IMR-90 (cell line): ENCODE measurements at regions of chr20 and their contacts with region 1.

Region 1: GRCh38 chr20:45044084-45044573 is 56.8 kb downstream of the KCNS1 start:
- DNase-seq: peak; percentile 86
- ATAC-seq: peak; percentile 94
- H3K4me3 ChIP-seq: no peak overlapping the region
- H3K27ac ChIP-seq: no peak overlapping the region
- H3K4me1 ChIP-seq: peaks cover 10% of the 10 kb centered on the region
- H3K27me3 ChIP-seq: no peaks in the 10 kb centered on the region
- CTCF ChIP-seq: peak; percentile 94
- POLR2A ChIP-seq: no peak
- RAD21 ChIP-seq: peak; percentile 92

Region 2: GRCh38 chr20:44448753-44449546 is 595.2 kb before region 1 on chr20:
- CTCF ChIA-PET with region 1: no interaction called
- POLR2A ChIA-PET with region 1: no interaction called
- dilution Hi-C with region 1: no loop called
- in situ Hi-C with region 1: no loop called
- intact Hi-C with region 1: no loop called
- DNase-seq: no peak
- ATAC-seq: no peak
- H3K4me3 ChIP-seq: no peak overlapping the region
- H3K27ac ChIP-seq: no peak overlapping the region
- H3K4me1 ChIP-seq: peaks cover 2% of the 10 kb centered on the region; the same call in 1 of the 2 replicates
- H3K27me3 ChIP-seq: peaks cover 34% of the 10 kb centered on the region
- CTCF ChIP-seq: peak; percentile 9; the same call in 1 of the 2 replicates
- POLR2A ChIP-seq: no peak
- RAD21 ChIP-seq: no peak

Region 3: DNA sequence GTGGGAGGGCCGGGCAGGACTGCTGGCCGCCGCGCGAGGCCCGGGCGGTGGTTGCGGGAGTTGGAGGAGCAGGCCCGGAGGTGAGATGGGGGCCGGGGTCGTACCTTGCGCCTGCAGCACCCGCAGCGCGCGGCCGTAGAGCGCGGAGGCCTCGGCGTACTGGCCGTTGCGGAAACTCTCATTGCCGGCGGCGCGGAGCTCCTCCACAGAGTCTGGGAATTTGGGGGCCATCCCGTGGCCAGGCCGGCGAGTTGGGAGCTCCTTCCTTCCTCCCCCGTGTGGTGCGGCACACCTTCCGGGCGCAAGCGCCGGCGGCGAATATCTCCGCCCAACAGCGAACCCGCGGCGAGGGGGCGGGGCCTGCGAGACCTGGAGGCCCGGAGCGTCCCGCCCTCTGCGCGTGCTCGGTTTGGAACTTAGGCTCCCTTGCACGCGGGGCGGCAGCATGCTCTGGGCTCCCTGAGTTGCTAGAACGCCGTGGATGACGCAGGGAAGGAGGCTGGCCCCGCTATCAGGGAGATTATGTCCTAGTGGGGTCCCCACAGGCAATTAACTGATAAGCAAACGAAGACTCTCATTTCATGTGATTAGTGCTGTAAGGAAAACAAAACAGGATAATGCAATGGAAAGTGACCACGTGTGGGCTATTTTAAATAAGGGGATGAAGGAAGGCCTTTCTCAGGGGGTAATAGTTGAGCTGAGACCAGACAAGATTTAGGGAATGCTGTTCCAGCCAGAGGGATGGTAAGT is 83.9 kb before region 1 on chr20 and contains the start of gene TOMM34:
- CTCF ChIA-PET with region 1: no interaction called
- POLR2A ChIA-PET with region 1: no interaction called
- dilution Hi-C with region 1: no loop called
- in situ Hi-C with region 1: no loop called
- intact Hi-C with region 1: no loop called
- DNase-seq: peak; percentile 90
- ATAC-seq: peak; percentile 95
- H3K4me3 ChIP-seq: peak within 1 kb of the TSS; percentile 82
- H3K27ac ChIP-seq: peak within 1 kb of the TSS; percentile 65
- H3K4me1 ChIP-seq: peaks cover 5% of the 10 kb centered on the region
- H3K27me3 ChIP-seq: no peaks in the 10 kb centered on the region
- CTCF ChIP-seq: no peak
- POLR2A ChIP-seq: peak; percentile 90; the same call in 1 of the 2 replicates
- RAD21 ChIP-seq: no peak
- total RNA-seq, gene TOMM34: 82.8 and 97.5 TPM in 2 replicates

Region 4: GRCh38 chr20:45011108-45011526 is 33.0 kb before region 1 on chr20:
- CTCF ChIA-PET with region 1: interaction called, 10 read pairs
- POLR2A ChIA-PET with region 1: no interaction called
- dilution Hi-C with region 1: no loop called
- in situ Hi-C with region 1: no loop called
- intact Hi-C with region 1: loop called (anchors 2 kb)
- DNase-seq: peak; percentile 80
- ATAC-seq: peak; percentile 74
- H3K4me3 ChIP-seq: no peak overlapping the region
- H3K27ac ChIP-seq: no peak overlapping the region
- H3K4me1 ChIP-seq: peaks cover 15% of the 10 kb centered on the region
- H3K27me3 ChIP-seq: no peaks in the 10 kb centered on the region
- CTCF ChIP-seq: peak; percentile 75
- POLR2A ChIP-seq: no peak
- RAD21 ChIP-seq: peak; percentile 81

Region 5: GRCh38 chr20:45111799-45112471 is 67.8 kb after region 1 on chr20:
- CTCF ChIA-PET with region 1: interaction called, 13 read pairs
- POLR2A ChIA-PET with region 1: no interaction called
- dilution Hi-C with region 1: no loop called
- in situ Hi-C with region 1: no loop called
- intact Hi-C with region 1: loop called (anchors 1 kb)
- DNase-seq: no peak
- ATAC-seq: peak; percentile 48; the same call in 1 of the 2 replicates
- H3K4me3 ChIP-seq: no peak overlapping the region
- H3K27ac ChIP-seq: no peak overlapping the region
- H3K4me1 ChIP-seq: no peaks in the 10 kb centered on the region
- H3K27me3 ChIP-seq: peaks cover 40% of the 10 kb centered on the region
- CTCF ChIP-seq: peak; percentile 40
- POLR2A ChIP-seq: no peak
- RAD21 ChIP-seq: peak; percentile 31